ENCODE measurements at regions of chr21 and their contacts with region 1.

Region 1: GRCh38 chr21:32727687-32728455 is at the start of gene SYNJ1:
- DNase-seq: peak; percentile 95 to 96
- ATAC-seq: peak; percentile 88 to 97 (median 92)
- H3K4me3 ChIP-seq: peak within 1 kb of the TSS; percentile 92
- H3K4me3 Mint-ChIP-seq: peak within 1 kb of the TSS; percentile 95
- H3K27ac ChIP-seq: peak within 1 kb of the TSS; percentile 78
- H3K27ac Mint-ChIP-seq: peak within 1 kb of the TSS; percentile 85 to 96
- H3K4me1 ChIP-seq: peaks cover 6% of the 10 kb centered on the region
- H3K4me1 Mint-ChIP-seq: peaks cover 31 to 32% of the 10 kb centered on the region in 2 donors
- H3K27me3 ChIP-seq: no peaks in the 10 kb centered on the region
- H3K27me3 Mint-ChIP-seq: no peaks in the 10 kb centered on the region
- CTCF ChIP-seq: no peak
- total RNA-seq, gene SYNJ1: 16.2 to 22.4 (median 20.1) TPM

Region 2: GRCh38 chr21:32770871-32771523 is 43.1 kb after region 1 on chr21:
- intact Hi-C with region 1: loop called (anchors 1 kb)
- DNase-seq: no peak
- ATAC-seq: peak; percentile 41 to 57 (median 43)
- H3K4me3 ChIP-seq: peak overlapping the region; percentile 77
- H3K4me3 Mint-ChIP-seq: peak overlapping the region; percentile 96
- H3K27ac ChIP-seq: peak overlapping the region; percentile 75
- H3K27ac Mint-ChIP-seq: peak overlapping the region; percentile 98 to 99
- H3K4me1 ChIP-seq: peaks cover 9% of the 10 kb centered on the region
- H3K4me1 Mint-ChIP-seq: peaks cover 62 to 63% of the 10 kb centered on the region in 2 donors
- H3K27me3 ChIP-seq: no peaks in the 10 kb centered on the region
- H3K27me3 Mint-ChIP-seq: peaks cover 3 to 8% of the 10 kb centered on the region in 2 donors
- CTCF ChIP-seq: no peak

Region 3: DNA sequence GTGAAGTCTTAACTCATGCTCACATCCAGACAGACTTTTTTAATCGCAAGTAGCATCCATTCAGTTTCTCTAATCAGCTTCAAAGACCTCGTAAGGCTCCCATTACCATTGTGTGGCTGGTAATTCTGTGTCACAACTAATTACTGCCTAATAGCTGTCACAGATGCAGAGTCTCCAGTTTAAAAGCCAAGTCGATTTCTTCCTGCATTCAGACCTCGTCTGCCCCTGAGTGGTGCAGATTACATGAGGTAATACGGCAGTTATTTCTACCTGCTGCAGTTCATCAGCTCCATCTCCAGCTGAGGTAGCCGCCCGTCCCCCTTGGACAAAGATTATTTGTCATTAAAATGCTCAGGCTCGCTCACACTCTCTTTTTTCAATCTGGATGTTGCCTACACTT is 263.5 kb after region 1 on chr21:
- intact Hi-C with region 1: no loop called
- DNase-seq: no peak
- ATAC-seq: no peak
- H3K4me3 ChIP-seq: no peak overlapping the region
- H3K4me3 Mint-ChIP-seq: no peak overlapping the region
- H3K27ac ChIP-seq: no peak overlapping the region
- H3K27ac Mint-ChIP-seq: no peak overlapping the region
- H3K4me1 ChIP-seq: no peaks in the 10 kb centered on the region
- H3K4me1 Mint-ChIP-seq: peaks cover 0 to 10% of the 10 kb centered on the region in 2 donors
- H3K27me3 ChIP-seq: no peaks in the 10 kb centered on the region
- H3K27me3 Mint-ChIP-seq: peaks cover 37% of the 10 kb centered on the region in 2 donors
- CTCF ChIP-seq: no peak

Measured in natural killer cell (primary cell).